ENCODE measurements at regions of chr17 and their contacts with region 1.

Region 1: GRCh38 chr17:30824356-30825145 is at the start of gene CRLF3:
- DNase-seq: peak; percentile 91
- H3K4me3 Mint-ChIP-seq: peak within 1 kb of the TSS; percentile 85
- H3K27ac Mint-ChIP-seq: peak within 1 kb of the TSS; percentile 94
- H3K4me1 Mint-ChIP-seq: peaks cover 39% of the 10 kb centered on the region
- H3K27me3 Mint-ChIP-seq: no peaks in the 10 kb centered on the region
- total RNA-seq, gene CRLF3: 47.1 to 47.7 TPM

Region 2: GRCh38 chr17:30372755-30373154 is 451.8 kb before region 1 on chr17:
- CTCF ChIA-PET with region 1: no interaction called
- intact Hi-C with region 1: loop called (anchors 2 kb)
- DNase-seq: peak; percentile 73
- H3K4me3 Mint-ChIP-seq: no peak overlapping the region
- H3K27ac Mint-ChIP-seq: peak overlapping the region; percentile 68
- H3K4me1 Mint-ChIP-seq: peaks cover 62% of the 10 kb centered on the region
- H3K27me3 Mint-ChIP-seq: no peaks in the 10 kb centered on the region

Region 3: DNA sequence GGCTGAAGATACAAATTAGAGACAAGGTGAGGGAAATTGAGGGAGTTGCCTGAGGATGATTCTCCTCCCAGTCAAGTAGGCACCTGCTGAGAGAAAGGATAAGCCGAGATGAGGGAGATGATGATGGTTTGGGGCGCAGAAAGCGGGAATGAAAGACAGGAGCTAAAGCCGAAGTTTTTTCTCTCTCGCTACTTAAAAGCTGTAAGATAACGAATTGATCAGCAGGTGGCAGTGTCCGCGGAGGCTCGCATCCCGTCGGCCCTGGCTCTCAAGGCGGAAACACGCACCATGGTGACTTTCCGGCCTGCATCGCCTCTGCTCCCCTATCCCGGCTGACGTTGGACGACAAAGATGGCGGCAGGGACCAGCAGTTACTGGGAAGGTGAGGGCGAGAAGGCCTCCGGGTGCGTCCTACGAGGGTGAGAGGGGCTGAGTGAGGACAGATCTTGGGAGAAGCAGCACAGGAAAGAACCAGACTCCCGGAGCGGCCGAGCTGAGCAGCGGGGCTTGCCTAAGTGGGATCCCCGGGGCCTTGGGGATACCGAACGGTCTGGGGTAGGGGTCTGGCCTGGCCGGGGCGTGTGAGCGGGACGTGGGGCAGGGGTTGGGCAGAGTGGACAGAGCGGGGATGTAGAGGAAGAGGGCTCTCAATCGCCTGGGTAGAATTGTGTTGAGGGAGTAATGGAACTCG is 347.3 kb before region 1 on chr17 and contains the start of gene GOSR1:
- CTCF ChIA-PET with region 1: interaction called, 3 read pairs
- intact Hi-C with region 1: loop called (anchors 1 kb)
- DNase-seq: peak; percentile 97
- H3K4me3 Mint-ChIP-seq: peak within 1 kb of the TSS; percentile 98
- H3K27ac Mint-ChIP-seq: peak within 1 kb of the TSS; percentile 97
- H3K4me1 Mint-ChIP-seq: peaks cover 36% of the 10 kb centered on the region
- H3K27me3 Mint-ChIP-seq: peaks cover 2% of the 10 kb centered on the region
- total RNA-seq, gene GOSR1: 33.9 to 37.3 TPM

Region 4: GRCh38 chr17:30503558-30503957 is 321.0 kb before region 1 on chr17:
- CTCF ChIA-PET with region 1: no interaction called
- intact Hi-C with region 1: no loop called
- DNase-seq: no peak
- H3K4me3 Mint-ChIP-seq: no peak overlapping the region
- H3K27ac Mint-ChIP-seq: no peak overlapping the region
- H3K4me1 Mint-ChIP-seq: peaks cover 31% of the 10 kb centered on the region
- H3K27me3 Mint-ChIP-seq: no peaks in the 10 kb centered on the region

Region 5: GRCh38 chr17:30780343-30780742 is 44.2 kb before region 1 on chr17:
- CTCF ChIA-PET with region 1: interaction called, 16 read pairs
- intact Hi-C with region 1: loop called (anchors 1 kb)
- DNase-seq: peak; percentile 57
- H3K4me3 Mint-ChIP-seq: no peak overlapping the region
- H3K27ac Mint-ChIP-seq: peak overlapping the region; percentile 80
- H3K4me1 Mint-ChIP-seq: peaks cover 18% of the 10 kb centered on the region
- H3K27me3 Mint-ChIP-seq: no peaks in the 10 kb centered on the region

Region 6: DNA sequence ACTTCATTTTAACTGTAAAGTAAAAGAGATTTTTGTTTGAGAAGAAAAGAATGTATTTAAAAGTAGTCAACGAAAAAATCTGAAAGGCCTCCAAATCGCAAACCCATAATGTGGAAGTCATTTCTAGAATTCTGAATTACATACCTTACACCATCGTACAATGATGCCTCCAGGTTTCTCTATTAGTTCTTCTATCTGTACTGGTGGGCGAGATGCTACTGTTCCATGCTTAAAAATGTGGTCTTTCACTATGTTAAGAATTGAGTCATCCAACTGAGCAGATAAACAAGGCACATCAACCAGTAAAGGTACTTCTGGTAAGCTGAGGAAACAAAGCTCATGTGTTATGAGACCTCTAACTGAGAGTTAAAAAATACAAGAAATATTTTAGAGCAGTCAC is 28.5 kb before region 1 on chr17:
- CTCF ChIA-PET with region 1: interaction called, 11 read pairs
- intact Hi-C with region 1: loop called (anchors 1 kb)
- DNase-seq: no peak
- H3K4me3 Mint-ChIP-seq: no peak overlapping the region
- H3K27ac Mint-ChIP-seq: peak overlapping the region; percentile 91
- H3K4me1 Mint-ChIP-seq: peaks cover 17% of the 10 kb centered on the region
- H3K27me3 Mint-ChIP-seq: no peaks in the 10 kb centered on the region

Region 7: DNA sequence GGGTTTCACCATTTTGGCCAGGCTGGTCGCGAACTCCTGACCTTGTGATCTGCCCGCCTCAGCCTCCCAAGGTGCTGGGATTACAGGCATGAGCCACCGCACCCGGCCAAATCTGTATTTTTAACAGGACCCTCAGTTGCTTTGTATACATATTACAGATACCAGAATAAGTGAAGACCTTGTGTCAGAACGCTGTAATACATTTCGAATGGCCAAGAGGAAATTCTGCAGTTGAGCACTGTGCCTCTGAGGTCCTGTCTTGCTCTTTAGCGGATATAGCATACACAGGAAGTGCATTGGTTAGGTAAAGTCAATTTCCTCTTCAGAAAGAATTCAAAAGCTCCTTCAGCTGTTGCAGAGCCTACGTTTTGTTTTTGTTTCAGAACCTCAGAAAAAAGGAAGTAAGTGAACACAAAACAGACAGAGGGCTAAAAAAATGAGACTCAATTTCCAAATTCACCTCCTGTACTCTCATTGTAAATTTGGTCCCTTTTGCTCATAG is 15.7 kb before region 1 on chr17:
- CTCF ChIA-PET with region 1: interaction called, 170 read pairs
- intact Hi-C with region 1: loop called (anchors 1 kb)
- DNase-seq: peak; percentile 49
- H3K4me3 Mint-ChIP-seq: peak overlapping the region; percentile 87
- H3K27ac Mint-ChIP-seq: peak overlapping the region; percentile 99
- H3K4me1 Mint-ChIP-seq: peaks cover 70% of the 10 kb centered on the region
- H3K27me3 Mint-ChIP-seq: no peaks in the 10 kb centered on the region

Region 8: GRCh38 chr17:31487648-31488263 is 663.2 kb after region 1 on chr17:
- CTCF ChIA-PET with region 1: no interaction called
- intact Hi-C with region 1: loop called (anchors 5 kb)
- DNase-seq: peak; percentile 91
- H3K4me3 Mint-ChIP-seq: peak overlapping the region; percentile 81
- H3K27ac Mint-ChIP-seq: peak overlapping the region; percentile 34
- H3K4me1 Mint-ChIP-seq: peaks cover 45% of the 10 kb centered on the region
- H3K27me3 Mint-ChIP-seq: no peaks in the 10 kb centered on the region

Measured in activated naive CD4-positive, alpha-beta T cell treated with anti-CD3 and anti-CD28 coated beads for 36 hours (primary cell).